Endothelial cell of umbilical vein (primary cell): ENCODE measurements at regions of chr15 and their contacts with region 1.

Region 1: GRCh38 chr15:89243691-89244471 is at the start of gene FANCI:
- DNase-seq: peak; percentile 92
- H3K4me3 ChIP-seq: peak within 1 kb of the TSS; percentile 81 to 92 (median 89)
- H3K27ac ChIP-seq: peak within 1 kb of the TSS; percentile 65
- H3K4me1 ChIP-seq: peaks cover 15% of the 10 kb centered on the region
- H3K27me3 ChIP-seq: peaks cover 5 to 7% of the 10 kb centered on the region in 2 experiments
- CTCF ChIP-seq: peak; percentile 45 to 51
- POLR2A ChIP-seq: no peak
- total RNA-seq, gene FANCI: 65.9 and 74.7 TPM in 2 replicates

Region 2: DNA sequence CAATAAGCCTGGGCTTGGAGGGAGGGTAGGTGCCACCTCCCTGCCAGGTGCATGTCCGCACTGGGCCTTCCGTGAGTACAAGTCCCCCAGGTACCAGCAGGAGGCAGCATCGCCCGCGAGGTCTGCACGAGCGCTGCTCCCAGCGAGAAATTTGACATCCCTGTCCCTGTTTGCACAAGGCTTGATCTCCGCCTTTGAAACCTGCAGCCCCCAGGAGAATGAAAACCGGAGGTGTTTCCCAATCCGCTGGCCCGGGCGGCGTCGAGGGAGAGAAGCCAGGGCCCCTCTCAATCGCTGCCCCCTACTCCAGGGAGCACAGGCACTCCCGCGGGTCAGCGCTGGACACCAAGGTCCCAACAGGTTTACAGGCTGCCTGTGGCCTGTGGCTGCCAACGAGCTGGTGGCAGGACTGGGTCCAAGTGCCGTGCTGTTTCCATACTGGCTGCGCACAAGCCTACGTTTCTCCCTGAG is 349.5 kb before region 1 on chr15:
- CTCF ChIA-PET with region 1: no interaction called
- POLR2A ChIA-PET with region 1: no interaction called
- dilution Hi-C with region 1: no loop called
- intact Hi-C with region 1: no loop called
- DNase-seq: peak; percentile 72
- H3K4me3 ChIP-seq: peak overlapping the region in 2 of 3 experiments; percentile 44 to 69
- H3K27ac ChIP-seq: no peak overlapping the region
- H3K4me1 ChIP-seq: peaks cover 36% of the 10 kb centered on the region
- H3K27me3 ChIP-seq: no peaks in the 10 kb centered on the region
- CTCF ChIP-seq: peak; percentile 69 to 85
- POLR2A ChIP-seq: no peak

Region 3: GRCh38 chr15:89150762-89151664 is 92.9 kb before region 1 on chr15:
- CTCF ChIA-PET with region 1: no interaction called
- POLR2A ChIA-PET with region 1: no interaction called
- dilution Hi-C with region 1: no loop called
- intact Hi-C with region 1: no loop called
- DNase-seq: no peak
- H3K4me3 ChIP-seq: no peak overlapping the region
- H3K27ac ChIP-seq: no peak overlapping the region
- H3K4me1 ChIP-seq: peaks cover 8% of the 10 kb centered on the region
- H3K27me3 ChIP-seq: no peaks in the 10 kb centered on the region
- CTCF ChIP-seq: no peak
- POLR2A ChIP-seq: no peak

Region 4: DNA sequence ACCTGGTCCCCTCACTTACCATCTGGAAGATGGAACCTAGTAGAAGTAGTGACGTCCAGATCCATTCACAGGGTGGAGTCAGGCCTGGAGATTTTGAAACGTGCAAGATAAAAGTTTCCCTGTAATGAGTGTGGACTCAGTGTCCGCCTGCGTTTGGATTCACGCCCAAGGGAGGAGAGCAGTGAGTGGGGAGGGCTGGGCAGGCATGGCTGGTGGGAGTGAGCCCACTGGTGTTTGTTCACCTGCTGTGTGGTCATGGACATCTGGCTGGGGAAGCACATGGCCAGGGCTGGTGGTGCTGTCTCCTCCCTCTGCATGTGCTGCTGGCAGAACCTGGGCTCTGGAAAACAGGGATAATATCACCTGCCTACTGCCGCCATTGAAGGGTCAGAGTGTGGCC is 59.5 kb before region 1 on chr15:
- CTCF ChIA-PET with region 1: no interaction called
- POLR2A ChIA-PET with region 1: no interaction called
- dilution Hi-C with region 1: no loop called
- intact Hi-C with region 1: no loop called
- DNase-seq: no peak
- H3K4me3 ChIP-seq: no peak overlapping the region
- H3K27ac ChIP-seq: no peak overlapping the region
- H3K4me1 ChIP-seq: no peaks in the 10 kb centered on the region
- H3K27me3 ChIP-seq: no peaks in the 10 kb centered on the region
- CTCF ChIP-seq: no peak
- POLR2A ChIP-seq: no peak

Region 5: DNA sequence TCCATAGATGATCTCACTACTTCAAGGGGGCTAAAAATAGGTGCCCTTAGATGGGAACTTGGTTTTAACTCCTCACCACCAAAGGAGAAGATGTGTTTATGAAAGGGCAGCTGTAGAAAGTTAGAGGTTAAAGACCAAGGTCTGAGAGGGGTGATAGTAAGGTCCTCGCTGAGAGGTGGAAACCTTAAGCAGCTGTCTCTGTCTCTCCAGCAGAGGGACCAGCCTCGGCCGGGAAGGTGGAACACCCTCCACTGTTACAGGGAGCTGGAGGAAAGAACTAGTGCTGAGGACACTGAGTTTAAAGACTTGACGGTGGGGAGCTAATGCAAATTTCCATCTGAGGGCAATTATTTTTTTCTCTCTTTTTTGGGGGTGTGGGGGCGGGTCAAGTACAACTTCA is 13.6 kb before region 1 on chr15:
- CTCF ChIA-PET with region 1: interaction called, 9 read pairs
- POLR2A ChIA-PET with region 1: no interaction called
- dilution Hi-C with region 1: no loop called
- intact Hi-C with region 1: loop called (anchors 1 kb)
- DNase-seq: no peak
- H3K4me3 ChIP-seq: no peak overlapping the region
- H3K27ac ChIP-seq: no peak overlapping the region
- H3K4me1 ChIP-seq: no peaks in the 10 kb centered on the region
- H3K27me3 ChIP-seq: peaks cover under 1 to 3% of the 10 kb centered on the region in 2 experiments
- CTCF ChIP-seq: no peak
- POLR2A ChIP-seq: no peak